ENCODE measurements at regions of chr20 and their contacts with region 1.

Region 1: DNA sequence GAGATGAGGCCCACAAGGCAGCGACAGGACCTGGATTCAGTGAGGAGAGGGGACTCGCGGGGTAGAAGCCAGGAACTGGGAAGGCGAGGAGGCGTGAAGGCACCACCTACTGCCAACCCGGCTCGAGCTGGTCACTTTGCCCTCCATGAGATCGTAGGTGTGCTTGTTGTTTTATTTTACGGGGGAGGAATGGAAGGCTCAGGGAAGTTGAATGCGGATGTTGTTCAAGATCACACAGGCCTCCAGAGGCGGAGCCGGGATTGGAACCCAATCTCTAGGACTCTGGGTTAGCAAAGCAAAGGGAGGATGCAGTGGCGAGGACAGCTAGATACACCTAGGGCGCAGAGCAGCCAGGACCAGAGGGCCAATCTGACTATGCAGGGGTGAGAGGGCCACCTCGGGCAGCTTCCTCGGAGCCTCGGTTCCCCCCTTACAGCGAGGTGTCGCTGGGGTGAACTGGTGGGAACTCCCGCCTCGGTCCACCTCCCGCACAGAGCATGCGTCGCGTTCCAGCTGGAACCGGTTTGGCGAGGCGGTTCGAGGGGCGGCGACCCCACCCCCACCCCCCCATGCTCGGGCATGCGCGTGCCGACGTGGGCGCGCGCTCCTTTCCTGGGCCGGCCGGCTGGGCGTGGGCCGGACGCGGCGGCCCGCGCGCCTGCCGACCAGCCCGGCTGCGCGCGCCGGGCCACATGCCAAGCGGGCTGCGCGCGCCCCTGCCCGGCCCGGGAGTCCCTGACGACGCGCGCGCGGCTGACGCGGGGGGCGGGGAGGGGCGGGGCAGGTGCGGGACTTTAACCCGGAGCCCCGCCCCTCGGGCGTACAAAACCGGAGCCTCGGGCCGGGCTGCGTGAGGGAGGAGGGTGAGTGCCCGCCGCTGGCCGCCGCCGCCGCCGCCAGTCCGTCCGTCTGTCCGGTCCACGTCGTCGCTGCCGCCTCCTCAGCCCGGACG is 80.4 kb upstream of the MYL9 start:
- DNase-seq: peak; percentile 67 to 97
- H3K4me3 ChIP-seq: peak overlapping the region; percentile 80 to 99
- H3K27ac ChIP-seq: peak overlapping the region; percentile 99
- H3K4me1 ChIP-seq: peaks cover 21 to 33% of the 10 kb centered on the region in 2 donors
- H3K27me3 ChIP-seq: no peaks in the 10 kb centered on the region
- CTCF ChIP-seq: no peak

Region 2: GRCh38 chr20:36493013-36493800 is 32.3 kb after region 1 on chr20:
- intact Hi-C with region 1: loop called (anchors 2 kb)
- DNase-seq: no peak
- H3K4me3 ChIP-seq: peak overlapping the region in 1 of 2 donors; percentile 15
- H3K27ac ChIP-seq: peak overlapping the region; percentile 64 to 83
- H3K4me1 ChIP-seq: peaks cover 31 to 58% of the 10 kb centered on the region in 2 donors
- H3K27me3 ChIP-seq: no peaks in the 10 kb centered on the region
- CTCF ChIP-seq: peak; percentile 18 to 53 (median 21)

Region 3: DNA sequence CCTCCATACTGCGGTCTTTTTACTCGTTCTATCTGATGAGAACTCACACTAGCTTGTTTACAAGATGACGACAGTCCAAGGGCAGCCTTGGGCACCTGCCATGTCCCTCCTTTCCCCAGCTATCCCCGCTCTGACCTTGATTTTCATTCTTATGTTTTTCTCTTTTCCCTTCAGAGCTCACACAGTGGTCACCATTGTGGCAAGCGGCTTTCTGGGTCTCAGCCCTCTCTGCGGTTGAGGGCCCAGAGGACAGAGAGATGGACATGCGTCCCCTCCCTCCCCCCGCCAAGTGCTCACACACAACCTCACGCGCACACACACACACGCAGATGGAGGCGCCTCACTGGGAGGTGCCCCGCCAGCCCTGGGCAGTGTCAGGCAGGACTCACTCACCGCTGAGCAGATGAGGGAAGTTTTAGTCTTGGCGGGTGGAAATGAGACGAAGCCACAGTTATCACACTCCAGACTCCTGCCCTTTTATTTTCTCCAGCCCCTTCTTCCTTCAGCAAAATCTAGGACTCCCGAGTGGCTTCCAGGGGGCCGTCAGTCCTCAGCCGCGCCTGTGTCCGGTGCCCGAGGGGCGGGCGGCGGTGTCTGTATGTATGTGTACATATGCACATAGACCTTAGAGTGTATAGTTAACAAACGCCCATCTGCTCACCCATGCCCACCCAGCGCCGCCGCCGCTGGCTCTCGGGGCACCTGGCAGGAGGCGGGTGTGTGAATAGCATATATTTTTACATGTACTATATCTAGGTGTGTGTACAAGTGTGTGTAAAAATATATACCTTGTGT is 66.6 kb after region 1 on chr20:
- intact Hi-C with region 1: loop called (anchors 5 kb)
- DNase-seq: peak in 1 of 2 donors; percentile 64
- H3K4me3 ChIP-seq: peak overlapping the region in 1 of 2 donors; percentile 2
- H3K27ac ChIP-seq: peak overlapping the region; percentile 65 to 76
- H3K4me1 ChIP-seq: peaks cover 0 to 24% of the 10 kb centered on the region in 2 donors
- H3K27me3 ChIP-seq: no peaks in the 10 kb centered on the region
- CTCF ChIP-seq: no peak

Region 4: GRCh38 chr20:36541227-36541763 is 80.4 kb after region 1 on chr20 and contains the start of gene MYL9:
- intact Hi-C with region 1: loop called (anchors 2 kb)
- DNase-seq: peak; percentile 75 to 97
- H3K4me3 ChIP-seq: peak within 1 kb of the TSS; percentile 92 to 93
- H3K27ac ChIP-seq: peak within 1 kb of the TSS; percentile 98 to 99
- H3K4me1 ChIP-seq: peaks cover 16 to 48% of the 10 kb centered on the region in 2 donors
- H3K27me3 ChIP-seq: no peaks in the 10 kb centered on the region
- CTCF ChIP-seq: no peak
- total RNA-seq, gene MYL9: 717 TPM

Region 5: GRCh38 chr20:36835453-36836198 is 374.7 kb after region 1 on chr20:
- intact Hi-C with region 1: loop called (anchors 10 kb)
- DNase-seq: peak; percentile 77 to 96
- H3K4me3 ChIP-seq: peak overlapping the region; percentile 18 to 56
- H3K27ac ChIP-seq: peak overlapping the region; percentile 81 to 92
- H3K4me1 ChIP-seq: peaks cover 22 to 50% of the 10 kb centered on the region in 2 donors
- H3K27me3 ChIP-seq: no peaks in the 10 kb centered on the region
- CTCF ChIP-seq: no peak

Region 6: DNA sequence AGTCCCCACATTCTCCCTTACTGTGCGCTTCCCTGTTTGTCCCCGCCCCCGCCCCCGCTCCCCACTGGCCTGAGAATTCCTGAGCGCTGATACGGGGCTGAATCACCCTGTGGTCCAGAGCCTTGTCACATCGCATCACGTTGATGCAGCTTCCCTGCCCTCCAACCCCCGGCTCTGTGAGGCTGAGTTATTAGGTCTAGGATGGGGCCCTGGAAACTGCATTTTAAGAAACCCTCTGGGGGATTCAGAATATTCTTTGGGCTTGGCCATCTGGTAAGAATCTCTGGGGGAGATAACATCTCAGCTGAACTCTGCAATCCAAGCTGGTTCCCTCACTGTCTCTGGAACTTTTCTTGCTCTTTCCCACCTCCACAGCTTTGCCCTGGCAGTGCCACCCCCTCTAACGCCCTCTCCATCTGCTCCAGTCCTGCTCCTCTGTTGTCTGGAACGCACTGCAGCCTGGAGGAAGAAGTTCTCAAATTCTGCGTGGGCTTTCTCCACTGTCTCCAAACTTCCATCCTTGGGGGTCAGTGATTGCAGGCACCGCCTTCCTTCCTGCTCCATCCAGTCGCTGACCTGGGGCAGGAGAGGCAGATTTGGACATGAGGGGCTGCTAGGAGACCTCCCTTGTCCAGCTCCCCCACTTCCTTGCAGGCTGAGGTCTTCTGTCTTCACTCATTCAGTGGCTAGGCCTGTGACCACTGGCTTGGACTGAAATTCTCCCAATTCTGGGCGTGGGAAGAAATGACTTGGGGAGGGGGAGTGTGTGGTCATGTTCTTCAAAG is 1757.1 kb after region 1 on chr20:
- intact Hi-C with region 1: no loop called
- DNase-seq: peak; percentile 27 to 90
- H3K4me3 ChIP-seq: no peak overlapping the region
- H3K27ac ChIP-seq: peak overlapping the region; percentile 54 to 68
- H3K4me1 ChIP-seq: peaks cover 0 to 8% of the 10 kb centered on the region in 2 donors
- H3K27me3 ChIP-seq: no peaks in the 10 kb centered on the region
- CTCF ChIP-seq: no peak